ENCODE measurements at regions of chr7 and their contacts with region 1.

Region 1: DNA sequence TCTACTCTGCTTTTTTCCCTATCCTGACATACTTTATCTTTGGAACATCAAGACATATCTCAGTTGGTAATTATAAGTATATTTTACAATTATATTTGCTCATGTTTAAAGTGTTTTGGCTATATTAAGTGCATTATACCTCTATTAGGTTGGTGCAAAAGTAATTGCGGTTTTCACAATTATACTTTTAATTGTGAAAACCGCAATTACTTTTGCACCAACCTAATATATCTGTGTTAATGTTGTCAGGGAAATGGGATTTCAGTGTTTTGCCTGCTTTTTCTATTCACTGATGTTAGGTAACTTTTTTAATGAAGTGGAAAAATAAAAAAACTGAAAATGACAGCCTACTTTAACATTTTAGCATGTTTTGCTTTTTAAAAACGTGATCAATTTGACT is 11.6 kb downstream of the SLC26A4 start:
- DNase-seq: no peak
- H3K4me3 Mint-ChIP-seq: no peak overlapping the region
- H3K27ac Mint-ChIP-seq: no peak overlapping the region
- H3K4me1 Mint-ChIP-seq: peaks cover 6% of the 10 kb centered on the region
- H3K27me3 Mint-ChIP-seq: peaks cover 6% of the 10 kb centered on the region

Region 2: GRCh38 chr7:107708956-107709355 is 36.8 kb after region 1 on chr7:
- CTCF ChIA-PET with region 1: no interaction called
- intact Hi-C with region 1: loop called (anchors 5 kb)
- DNase-seq: no peak
- H3K4me3 Mint-ChIP-seq: no peak overlapping the region
- H3K27ac Mint-ChIP-seq: no peak overlapping the region
- H3K4me1 Mint-ChIP-seq: no peaks in the 10 kb centered on the region
- H3K27me3 Mint-ChIP-seq: no peaks in the 10 kb centered on the region